HEK293 (cell line): ENCODE measurements at regions of chr16 and their contacts with region 1.

Region 1: DNA sequence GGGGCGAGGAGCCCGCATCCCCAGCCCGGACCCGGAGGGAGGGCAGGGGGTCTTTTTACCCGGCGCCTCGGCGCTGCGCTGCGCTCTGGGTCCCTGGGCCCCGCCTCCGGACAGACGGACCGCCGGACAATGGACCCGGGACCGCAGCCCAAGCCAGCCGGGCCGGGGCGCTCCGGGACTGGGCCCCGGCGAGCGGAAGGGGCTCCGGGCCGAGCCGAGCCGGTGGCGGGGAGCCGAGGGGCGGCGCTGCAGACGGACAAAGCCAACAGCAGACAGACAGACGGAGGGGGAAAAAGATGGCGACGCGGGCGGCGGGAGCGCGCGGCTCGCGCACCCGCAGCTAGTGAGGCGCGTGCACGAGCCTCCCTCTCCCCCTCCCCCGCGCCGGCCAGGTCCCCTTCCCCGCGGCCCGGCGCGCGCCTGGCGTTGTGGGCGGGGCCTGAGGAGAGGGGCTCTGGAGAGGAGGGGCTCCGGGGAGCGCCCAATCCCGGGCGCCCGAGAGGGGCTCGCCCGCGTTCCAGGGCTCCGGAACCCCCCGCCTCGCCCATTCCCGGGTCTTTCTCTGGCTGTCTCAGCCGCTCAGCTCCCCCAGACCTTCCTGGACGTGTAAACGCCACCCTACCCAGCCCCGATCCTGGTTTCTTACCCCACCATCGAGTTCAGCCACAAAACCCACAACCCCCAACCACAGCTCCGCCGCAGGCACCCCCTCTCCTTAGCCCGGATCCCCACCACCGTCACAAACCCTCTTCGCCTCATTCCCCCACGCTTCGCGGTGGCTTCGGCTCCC is at the start of gene ZNF821:
- H3K4me3 ChIP-seq: peak within 1 kb of the TSS; percentile 82
- H3K27ac ChIP-seq: peak within 1 kb of the TSS; percentile 89
- H3K4me1 ChIP-seq: 0 out of 2 replicates have a peak, but pooled peaks cover 2% of the 10 kb centered on the region
- CTCF ChIP-seq: no peak

Region 2: DNA sequence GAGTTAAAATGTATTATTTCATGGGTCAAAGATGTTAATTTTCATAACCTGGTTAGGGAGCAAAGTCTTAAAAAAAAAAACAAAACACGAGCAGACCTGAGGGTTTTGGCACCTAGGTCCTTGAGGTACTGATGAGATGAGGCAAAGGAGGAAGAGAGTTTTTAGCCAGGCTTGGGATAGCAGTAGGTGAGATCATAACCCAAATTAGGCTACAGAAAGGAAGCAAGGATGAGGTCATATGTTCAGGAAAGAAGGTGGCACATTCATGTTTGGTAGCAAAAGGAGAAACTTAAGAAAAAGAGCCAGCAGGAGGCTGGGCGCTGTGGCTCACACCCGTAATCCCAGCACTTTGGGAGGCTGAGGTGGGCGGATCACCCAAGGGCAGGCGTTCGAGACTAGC is 35.4 kb before region 1 on chr16:
- CTCF ChIA-PET with region 1: interaction called, 10 read pairs
- POLR2A ChIA-PET with region 1: interaction called, 3 read pairs
- H3K4me3 ChIP-seq: no peak overlapping the region
- H3K27ac ChIP-seq: no peak overlapping the region
- H3K4me1 ChIP-seq: peaks cover 9% of the 10 kb centered on the region; the same call in 1 of the 2 replicates
- CTCF ChIP-seq: no peak

Region 3: GRCh38 chr16:71855937-71856662 is 27.9 kb before region 1 on chr16:
- CTCF ChIA-PET with region 1: interaction called, 22 read pairs
- POLR2A ChIA-PET with region 1: no interaction called
- H3K4me3 ChIP-seq: no peak overlapping the region
- H3K27ac ChIP-seq: no peak overlapping the region
- H3K4me1 ChIP-seq: no peaks in the 10 kb centered on the region
- CTCF ChIP-seq: no peak

Region 4: GRCh38 chr16:71870818-71871217 is 13.2 kb before region 1 on chr16:
- CTCF ChIA-PET with region 1: interaction called, 29 read pairs
- POLR2A ChIA-PET with region 1: interaction called, 6 read pairs
- H3K4me3 ChIP-seq: no peak overlapping the region
- H3K27ac ChIP-seq: no peak overlapping the region
- H3K4me1 ChIP-seq: no peaks in the 10 kb centered on the region
- CTCF ChIP-seq: no peak

Region 5: GRCh38 chr16:71894921-71895678 is 11.1 kb after region 1 on chr16 and contains the start of gene IST1:
- CTCF ChIA-PET with region 1: interaction called, 6 read pairs
- POLR2A ChIA-PET with region 1: interaction called, 51 read pairs
- H3K4me3 ChIP-seq: peak within 1 kb of the TSS; percentile 55
- H3K27ac ChIP-seq: peak within 1 kb of the TSS; percentile 83
- H3K4me1 ChIP-seq: 0 out of 2 replicates have a peak, but pooled peaks cover 2% of the 10 kb centered on the region
- CTCF ChIP-seq: no peak; the same call in 1 of the 2 replicates

Region 6: GRCh38 chr16:71961066-71962039 is 77.3 kb after region 1 on chr16:
- CTCF ChIA-PET with region 1: interaction called, 59 read pairs
- POLR2A ChIA-PET with region 1: interaction called, 8 read pairs
- H3K4me3 ChIP-seq: no peak overlapping the region
- H3K27ac ChIP-seq: no peak overlapping the region
- H3K4me1 ChIP-seq: no peaks in the 10 kb centered on the region
- CTCF ChIP-seq: peak; percentile 74; the same call in 1 of the 2 replicates